Activated CD4-positive, alpha-beta T cell treated with anti-CD3 and anti-CD28 coated beads, Interleukin-2, amount 10 ng/mL, durations not matched to agents 7 days and 5 days (primary cell): ENCODE measurements at regions of chr7 and their contacts with region 1.

Region 1: GRCh38 chr7:73701357-73701995 is 18.0 kb downstream of the STX1A start:
- DNase-seq: peak; percentile 29
- H3K4me3 Mint-ChIP-seq: no peak overlapping the region
- H3K27ac Mint-ChIP-seq: no peak overlapping the region
- H3K4me1 Mint-ChIP-seq: peaks cover 3% of the 10 kb centered on the region
- H3K27me3 Mint-ChIP-seq: no peaks in the 10 kb centered on the region

Region 2: GRCh38 chr7:73715648-73716317 is 14.3 kb after region 1 on chr7:
- CTCF ChIA-PET with region 1: interaction called, 30 read pairs
- POLR2A ChIA-PET with region 1: interaction called, 3 read pairs
- DNase-seq: peak; percentile 8
- H3K4me3 Mint-ChIP-seq: no peak overlapping the region
- H3K27ac Mint-ChIP-seq: no peak overlapping the region
- H3K4me1 Mint-ChIP-seq: peaks cover 35% of the 10 kb centered on the region
- H3K27me3 Mint-ChIP-seq: peaks cover 14% of the 10 kb centered on the region